HepG2 (cell line): ENCODE measurements at regions of chr5 and their contacts with region 1.

Region 1: GRCh38 chr5:16776611-16777251 is 159.4 kb downstream of the MYO10 start:
- DNase-seq: peak; percentile 62
- ATAC-seq: peak; percentile 100
- H3K4me3 ChIP-seq: no peak overlapping the region
- H3K27ac ChIP-seq: no peak overlapping the region
- H3K4me1 ChIP-seq: peaks cover 12% of the 10 kb centered on the region
- H3K27me3 ChIP-seq: no peaks in the 10 kb centered on the region; a peak in 1 of 5 replicates
- CTCF ChIP-seq: peak; percentile 87
- EP300 ChIP-seq: no peak
- POLR2A ChIP-seq: no peak
- RAD21 ChIP-seq: peak; percentile 86

Region 2: DNA sequence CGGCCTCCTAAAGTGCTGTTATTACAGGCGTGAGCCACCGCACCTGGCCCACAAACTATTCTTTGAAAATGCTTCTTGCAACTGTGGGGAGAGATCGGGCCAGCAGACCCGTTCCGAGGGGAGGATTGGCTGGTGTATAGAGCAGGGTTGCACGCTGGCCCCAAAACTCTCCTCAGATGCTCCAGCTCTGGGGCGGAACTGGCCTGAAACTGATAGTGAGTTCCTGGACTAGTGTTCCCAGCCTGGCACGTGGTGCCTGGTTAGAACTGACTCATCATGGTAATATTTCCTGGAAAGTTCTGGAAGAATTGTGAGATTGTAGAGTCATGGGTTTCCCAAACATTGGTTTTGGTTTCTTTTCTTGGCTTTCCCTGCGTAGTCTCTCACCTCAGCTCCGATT is 1156.2 kb before region 1 on chr5:
- CTCF ChIA-PET with region 1: no interaction called
- POLR2A ChIA-PET with region 1: no interaction called
- in situ Hi-C with region 1: no loop called
- intact Hi-C with region 1: no loop called
- DNase-seq: no peak
- ATAC-seq: no peak
- H3K4me3 ChIP-seq: no peak overlapping the region
- H3K27ac ChIP-seq: no peak overlapping the region
- H3K4me1 ChIP-seq: no peaks in the 10 kb centered on the region
- H3K27me3 ChIP-seq: no peaks in the 10 kb centered on the region
- CTCF ChIP-seq: no peak
- EP300 ChIP-seq: no peak
- POLR2A ChIP-seq: no peak
- RAD21 ChIP-seq: no peak

Region 3: DNA sequence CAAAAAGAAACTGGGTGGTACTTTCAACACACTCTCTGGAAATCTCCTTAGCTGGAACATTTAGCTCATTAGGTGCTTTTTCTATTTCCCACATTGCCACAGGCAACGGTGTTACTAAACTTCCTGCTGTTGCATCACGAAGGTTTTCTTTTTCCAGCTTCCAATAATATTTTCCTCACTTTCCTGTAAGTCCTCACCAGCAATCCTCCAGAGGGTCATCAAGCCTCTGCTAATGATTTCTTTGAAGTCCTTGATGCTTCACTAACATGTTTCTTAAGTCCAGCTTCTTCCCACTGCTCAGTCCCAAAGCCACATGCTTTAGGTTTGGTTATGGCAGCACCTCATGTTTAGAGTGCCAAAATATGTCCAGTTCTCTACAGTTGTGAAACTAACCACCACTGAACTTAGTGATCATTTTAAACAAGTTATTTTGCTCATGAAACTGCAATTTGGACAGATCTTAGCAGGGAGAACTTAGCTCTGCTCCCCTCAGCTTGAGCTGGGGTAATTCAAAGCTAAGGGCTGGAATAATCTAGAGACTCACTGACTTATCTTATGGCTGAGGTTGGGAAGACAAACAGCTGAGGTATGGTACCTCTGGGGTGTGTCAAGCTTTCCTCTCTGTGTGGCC is 120.1 kb before region 1 on chr5:
- CTCF ChIA-PET with region 1: no interaction called
- POLR2A ChIA-PET with region 1: no interaction called
- in situ Hi-C with region 1: no loop called
- intact Hi-C with region 1: no loop called
- DNase-seq: no peak
- ATAC-seq: no peak
- H3K4me3 ChIP-seq: no peak overlapping the region
- H3K27ac ChIP-seq: no peak overlapping the region
- H3K4me1 ChIP-seq: no peaks in the 10 kb centered on the region
- H3K27me3 ChIP-seq: no peaks in the 10 kb centered on the region; a peak in 3 of 5 replicates
- CTCF ChIP-seq: no peak
- EP300 ChIP-seq: no peak
- POLR2A ChIP-seq: no peak
- RAD21 ChIP-seq: no peak

Region 4: DNA sequence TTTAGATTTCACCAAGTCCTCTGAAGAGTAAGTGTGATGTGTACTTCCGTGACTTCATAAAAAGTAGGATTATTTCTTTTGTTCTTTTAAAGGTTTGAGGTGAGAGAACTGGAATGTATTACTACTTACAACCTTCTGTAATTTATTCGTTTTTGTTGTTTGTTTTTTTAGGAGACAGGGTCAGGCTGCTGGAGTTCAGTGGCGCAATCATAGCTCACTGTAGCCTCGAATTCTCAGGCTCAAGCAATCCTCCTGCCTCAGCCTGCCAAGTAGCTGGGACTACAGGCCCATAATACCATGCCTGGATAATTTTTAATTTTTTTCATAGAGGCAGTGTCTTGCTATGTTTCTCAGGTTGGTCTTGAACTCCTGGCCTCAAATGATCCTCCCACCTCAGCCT is 91.7 kb before region 1 on chr5:
- CTCF ChIA-PET with region 1: interaction called, 31 read pairs
- POLR2A ChIA-PET with region 1: interaction called, 3 read pairs
- in situ Hi-C with region 1: loop called (anchors 5 kb)
- intact Hi-C with region 1: loop called (anchors 1 kb)
- DNase-seq: no peak
- ATAC-seq: no peak
- H3K4me3 ChIP-seq: no peak overlapping the region
- H3K27ac ChIP-seq: no peak overlapping the region
- H3K4me1 ChIP-seq: no peaks in the 10 kb centered on the region
- H3K27me3 ChIP-seq: no peaks in the 10 kb centered on the region
- CTCF ChIP-seq: no peak
- EP300 ChIP-seq: no peak
- POLR2A ChIP-seq: no peak
- RAD21 ChIP-seq: no peak

Region 5: DNA sequence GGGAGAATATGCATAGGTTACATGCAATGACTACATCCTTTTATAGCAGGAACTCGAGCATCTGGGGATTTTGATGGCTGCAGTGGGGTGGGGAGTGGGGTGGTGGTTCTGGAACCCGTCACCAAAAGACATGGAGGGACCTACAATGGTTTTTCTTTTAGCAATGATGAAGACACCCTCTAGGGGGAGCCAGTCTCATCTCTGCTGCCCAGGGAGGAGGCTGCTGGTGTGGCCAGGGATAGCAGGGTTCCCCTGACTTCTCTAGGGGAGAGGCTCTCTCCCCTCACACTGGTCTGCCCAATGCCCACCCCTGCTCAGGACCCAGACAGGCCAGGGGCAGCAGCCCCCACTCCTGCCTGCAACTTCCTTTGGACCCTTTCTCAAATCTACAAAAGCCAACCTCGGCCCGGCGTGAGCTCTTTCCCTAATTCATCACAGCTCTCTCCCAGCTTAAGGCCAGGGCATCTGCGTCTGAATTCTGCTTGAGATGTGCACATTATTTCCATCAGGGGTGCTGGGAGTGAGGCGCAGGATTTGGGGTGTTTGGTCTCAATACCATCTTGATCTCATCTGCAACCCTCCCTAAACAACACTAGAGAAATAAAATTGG is 86.4 kb before region 1 on chr5:
- CTCF ChIA-PET with region 1: interaction called, 31 read pairs
- POLR2A ChIA-PET with region 1: interaction called, 3 read pairs
- in situ Hi-C with region 1: loop called (anchors 5 kb)
- intact Hi-C with region 1: loop called (anchors 1 kb)
- DNase-seq: peak; percentile 59
- ATAC-seq: peak; percentile 99
- H3K4me3 ChIP-seq: no peak overlapping the region
- H3K27ac ChIP-seq: no peak overlapping the region
- H3K4me1 ChIP-seq: no peaks in the 10 kb centered on the region
- H3K27me3 ChIP-seq: no peaks in the 10 kb centered on the region
- CTCF ChIP-seq: peak; percentile 80
- EP300 ChIP-seq: no peak
- POLR2A ChIP-seq: no peak
- RAD21 ChIP-seq: peak; percentile 79

Region 6: GRCh38 chr5:16721151-16722096 is 55.3 kb before region 1 on chr5:
- CTCF ChIA-PET with region 1: no interaction called
- POLR2A ChIA-PET with region 1: no interaction called
- in situ Hi-C with region 1: no loop called
- intact Hi-C with region 1: loop called (anchors 5 kb)
- DNase-seq: peak; percentile 89
- ATAC-seq: peak; percentile 97
- H3K4me3 ChIP-seq: peak overlapping the region in 2 of 3 experiments; percentile 37 to 41; a peak in 2 of 6 replicates
- H3K27ac ChIP-seq: peak overlapping the region; percentile 88
- H3K4me1 ChIP-seq: peaks cover 36% of the 10 kb centered on the region
- H3K27me3 ChIP-seq: no peaks in the 10 kb centered on the region
- CTCF ChIP-seq: no peak
- EP300 ChIP-seq: peak in 1 of 2 experiments; percentile 92; a peak in 2 of 4 replicates
- POLR2A ChIP-seq: 0 out of 4 replicates have a peak, but pooled peaks of 1 of the 2 experiments have one; percentile 24
- RAD21 ChIP-seq: no peak

Region 7: GRCh38 chr5:16759147-16759773 is 17.5 kb before region 1 on chr5:
- CTCF ChIA-PET with region 1: no interaction called
- POLR2A ChIA-PET with region 1: interaction called, 14 read pairs
- in situ Hi-C with region 1: no loop called
- intact Hi-C with region 1: loop called (anchors 2 kb)
- DNase-seq: no peak
- ATAC-seq: no peak
- H3K4me3 ChIP-seq: no peak overlapping the region
- H3K27ac ChIP-seq: peak overlapping the region; percentile 60
- H3K4me1 ChIP-seq: peaks cover 32% of the 10 kb centered on the region
- H3K27me3 ChIP-seq: no peaks in the 10 kb centered on the region; a peak in 1 of 5 replicates
- CTCF ChIP-seq: no peak
- EP300 ChIP-seq: no peak
- POLR2A ChIP-seq: no peak
- RAD21 ChIP-seq: no peak

Region 8: GRCh38 chr5:16894236-16895057 is 117.7 kb after region 1 on chr5:
- CTCF ChIA-PET with region 1: no interaction called
- POLR2A ChIA-PET with region 1: no interaction called
- in situ Hi-C with region 1: no loop called
- intact Hi-C with region 1: no loop called
- DNase-seq: peak; percentile 75
- ATAC-seq: peak; percentile 99
- H3K4me3 ChIP-seq: no peak overlapping the region
- H3K27ac ChIP-seq: no peak overlapping the region
- H3K4me1 ChIP-seq: peaks cover 20% of the 10 kb centered on the region
- H3K27me3 ChIP-seq: peaks cover 0 to 5% of the 10 kb centered on the region in 2 experiments; a peak in 1 of 5 replicates
- CTCF ChIP-seq: no peak
- EP300 ChIP-seq: no peak
- POLR2A ChIP-seq: no peak
- RAD21 ChIP-seq: no peak